H1 (cell line): ENCODE measurements at regions of chr11 and their contacts with region 1.

Region 1: DNA sequence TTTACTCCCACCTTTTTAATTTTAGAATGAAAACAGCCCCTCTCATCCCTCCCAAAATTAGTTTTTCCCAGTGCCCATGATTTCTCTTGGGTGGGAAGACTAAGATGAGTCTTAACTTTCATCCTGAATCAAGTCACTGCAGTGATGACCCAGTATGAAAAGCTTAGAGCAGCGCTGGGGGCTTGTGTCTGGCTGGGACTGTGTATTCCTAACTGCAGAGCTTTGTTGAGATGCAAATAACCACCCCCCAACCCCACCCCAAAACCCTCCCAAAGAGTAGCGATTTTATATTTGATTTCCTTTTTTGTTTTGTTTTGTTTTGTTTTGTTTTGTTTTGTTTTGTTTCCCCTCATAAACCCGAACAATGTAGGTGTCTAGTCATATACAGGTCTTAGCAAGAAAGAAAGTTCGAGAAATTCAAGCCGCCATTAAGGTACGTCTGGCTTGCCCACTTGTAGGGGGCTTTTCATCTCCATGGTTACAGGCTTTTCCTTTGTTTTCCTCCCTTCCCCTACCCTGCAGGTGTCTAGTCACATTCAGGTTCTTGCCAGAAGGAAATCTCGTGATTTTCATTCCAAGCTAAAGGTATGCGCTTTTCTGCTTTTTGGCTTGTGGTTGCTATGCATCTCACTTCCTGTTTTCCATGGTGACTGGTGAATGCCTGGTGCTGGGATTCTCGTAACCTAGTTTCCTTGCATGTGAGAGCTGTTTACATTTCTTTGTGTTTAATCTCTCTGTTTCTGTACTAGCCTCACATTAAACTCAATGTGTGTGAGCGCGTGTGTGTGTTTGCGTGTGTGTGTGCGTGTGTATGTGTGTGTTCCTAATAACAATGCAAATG is 144.6 kb upstream of the RASSF10 start:
- DNase-seq: peak in 1 of 2 experiments; percentile 75
- H3K4me3 ChIP-seq: peak overlapping the region; percentile 9 to 50 (median 13); a peak in 5 of 8 replicates
- H3K27ac ChIP-seq: peak overlapping the region; percentile 95
- H3K4me1 ChIP-seq: peaks cover 6 to 29% (median 26%) of the 10 kb centered on the region in 4 experiments
- H3K27me3 ChIP-seq: no peaks in the 10 kb centered on the region
- CTCF ChIP-seq: no peak
- EP300 ChIP-seq: peak in 1 of 2 experiments; percentile 95; a peak in 1 of 3 replicates
- POLR2A ChIP-seq: peak; percentile 6 to 9; a peak in 2 of 3 replicates
- RAD21 ChIP-seq: no peak

Region 2: GRCh38 chr11:12724301-12725046 is 140.1 kb before region 1 on chr11:
- CTCF ChIA-PET with region 1: interaction called, 5 read pairs
- POLR2A ChIA-PET with region 1: interaction called, 14 read pairs
- DNase-seq: peak; percentile 77 to 89
- H3K4me3 ChIP-seq: peak overlapping the region in 1 of 4 experiments; percentile 38; a peak in 4 of 8 replicates
- H3K27ac ChIP-seq: peak overlapping the region; percentile 62
- H3K4me1 ChIP-seq: peaks cover 15 to 40% (median 26%) of the 10 kb centered on the region in 4 experiments; a peak in 6 of 7 replicates
- H3K27me3 ChIP-seq: no peaks in the 10 kb centered on the region; a peak in 1 of 7 replicates
- CTCF ChIP-seq: no peak
- EP300 ChIP-seq: peak in 1 of 2 experiments; percentile 95; a peak in 2 of 3 replicates
- POLR2A ChIP-seq: peak in 1 of 2 experiments; percentile 49; a peak in 1 of 3 replicates
- RAD21 ChIP-seq: peak; percentile 31 to 33; a peak in 3 of 4 replicates

Region 3: GRCh38 chr11:12827929-12828812 is 36.4 kb before region 1 on chr11:
- CTCF ChIA-PET with region 1: interaction called, 11 read pairs
- POLR2A ChIA-PET with region 1: interaction called, 32 read pairs
- DNase-seq: peak in 1 of 2 experiments; percentile 29
- H3K4me3 ChIP-seq: peak overlapping the region; percentile 44 to 60 (median 50); a peak in 7 of 8 replicates
- H3K27ac ChIP-seq: peak overlapping the region; percentile 73
- H3K4me1 ChIP-seq: peaks cover 24 to 42% (median 32%) of the 10 kb centered on the region in 4 experiments
- H3K27me3 ChIP-seq: no peaks in the 10 kb centered on the region
- CTCF ChIP-seq: no peak
- EP300 ChIP-seq: no peak
- POLR2A ChIP-seq: peak in 1 of 2 experiments; percentile 68; a peak in 2 of 3 replicates
- RAD21 ChIP-seq: no peak

Region 4: DNA sequence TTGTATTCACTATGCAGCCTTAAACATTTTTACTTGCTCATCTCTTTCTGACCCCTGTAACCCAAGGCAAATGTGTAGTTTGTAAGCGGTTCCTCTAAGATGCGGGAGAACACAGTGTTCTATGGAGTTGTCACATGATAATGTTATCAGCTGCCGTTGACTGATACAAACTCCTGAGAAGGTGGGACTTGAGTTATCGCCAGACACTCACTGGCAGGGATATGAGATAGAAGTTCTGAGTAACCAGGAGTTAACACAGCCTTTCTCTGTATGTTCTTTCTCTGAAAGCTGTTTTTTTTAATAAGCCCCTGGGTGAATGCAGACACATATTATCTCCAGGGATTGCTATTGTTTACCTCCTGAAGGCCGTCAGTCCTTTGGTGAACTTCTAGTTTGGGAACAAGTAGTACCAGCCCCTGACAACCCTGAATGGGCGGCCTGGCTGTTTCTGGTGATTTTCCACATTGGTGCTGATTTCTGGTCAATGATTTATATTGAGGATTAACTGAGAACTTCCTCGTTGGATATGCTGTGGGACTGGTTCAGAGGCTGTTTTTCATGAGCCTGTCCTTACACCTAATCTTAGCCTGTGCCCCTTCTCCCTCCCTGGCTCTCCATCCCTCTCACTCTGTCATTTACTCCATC is 10.8 kb before region 1 on chr11:
- CTCF ChIA-PET with region 1: interaction called, 9 read pairs
- POLR2A ChIA-PET with region 1: interaction called, 13 read pairs
- DNase-seq: no peak
- H3K4me3 ChIP-seq: no peak overlapping the region
- H3K27ac ChIP-seq: no peak overlapping the region
- H3K4me1 ChIP-seq: peaks cover 0 to 7% (median 3%) of the 10 kb centered on the region in 4 experiments; a peak in 1 of 7 replicates
- H3K27me3 ChIP-seq: no peaks in the 10 kb centered on the region
- CTCF ChIP-seq: no peak
- EP300 ChIP-seq: no peak
- POLR2A ChIP-seq: no peak
- RAD21 ChIP-seq: no peak

Region 5: GRCh38 chr11:12888525-12889158 is 24.1 kb after region 1 on chr11:
- CTCF ChIA-PET with region 1: interaction called, 88 read pairs
- POLR2A ChIA-PET with region 1: interaction called, 4 read pairs
- DNase-seq: peak; percentile 65 to 89
- H3K4me3 ChIP-seq: no peak overlapping the region
- H3K27ac ChIP-seq: no peak overlapping the region
- H3K4me1 ChIP-seq: peaks cover 0 to 7% (median 3%) of the 10 kb centered on the region in 4 experiments; a peak in 3 of 7 replicates
- H3K27me3 ChIP-seq: no peaks in the 10 kb centered on the region
- CTCF ChIP-seq: peak; percentile 68 to 81 (median 72)
- EP300 ChIP-seq: no peak
- POLR2A ChIP-seq: no peak
- RAD21 ChIP-seq: peak; percentile 87 to 92

Region 6: GRCh38 chr11:12909879-12910278 is 45.3 kb after region 1 on chr11:
- CTCF ChIA-PET with region 1: no interaction called
- POLR2A ChIA-PET with region 1: no interaction called
- DNase-seq: no peak
- H3K4me3 ChIP-seq: no peak overlapping the region
- H3K27ac ChIP-seq: no peak overlapping the region
- H3K4me1 ChIP-seq: peaks cover 3 to 14% (median 8%) of the 10 kb centered on the region in 4 experiments; a peak in 6 of 7 replicates
- H3K27me3 ChIP-seq: no peaks in the 10 kb centered on the region
- CTCF ChIP-seq: no peak
- EP300 ChIP-seq: no peak
- POLR2A ChIP-seq: no peak
- RAD21 ChIP-seq: no peak